ENCODE measurements at regions of chr13 and their contacts with region 1.

Region 1: DNA sequence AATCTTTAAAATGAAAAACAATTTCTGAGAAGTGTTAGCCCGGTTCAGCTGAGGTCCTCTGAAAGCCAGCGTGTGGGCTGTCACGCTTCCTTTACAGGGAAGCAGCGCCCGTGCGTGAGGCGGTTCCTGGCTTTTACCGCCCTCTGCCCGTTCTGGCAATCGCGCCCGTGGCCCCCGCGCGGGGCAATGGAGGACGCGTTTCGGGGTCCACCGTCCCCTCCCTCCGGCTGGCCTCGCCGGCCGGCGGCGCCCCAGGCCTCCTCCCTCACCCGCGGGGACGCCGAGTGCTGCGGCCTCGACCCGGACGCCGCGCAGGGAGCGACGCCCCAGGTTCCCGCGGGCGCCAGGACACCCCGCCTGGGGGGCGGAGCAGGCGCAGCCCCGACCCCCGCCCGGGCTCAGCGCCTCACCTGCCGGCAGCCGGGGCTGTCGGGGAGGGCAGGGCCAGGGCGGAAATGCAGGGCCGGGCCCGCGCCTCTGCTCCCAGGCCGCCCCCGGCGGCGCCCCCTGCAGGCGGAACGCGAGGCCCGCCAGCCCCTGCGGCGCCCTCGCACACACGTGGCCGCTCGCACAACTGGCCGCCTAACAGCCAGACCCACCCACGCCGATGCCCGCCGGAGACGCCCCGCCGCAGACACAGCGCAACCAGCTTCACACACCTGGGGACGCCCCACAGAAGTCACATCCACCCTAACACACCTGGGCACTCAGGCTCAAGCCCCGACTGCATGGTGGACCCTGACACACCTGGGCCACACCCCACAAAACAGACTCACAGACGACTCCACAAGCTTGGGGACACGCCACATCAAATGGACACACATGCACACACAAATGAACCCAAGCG is at the start of gene GGACT:
- DNase-seq: peak; percentile 95
- H3K4me3 ChIP-seq: peak within 1 kb of the TSS; percentile 72 to 74
- H3K27ac ChIP-seq: peak within 1 kb of the TSS in 1 of 2 experiments; percentile 5; a peak in 1 of 4 replicates
- H3K4me1 ChIP-seq: peaks cover 0 to 5% of the 10 kb centered on the region in 2 experiments; a peak in 1 of 4 replicates
- H3K27me3 ChIP-seq: no peaks in the 10 kb centered on the region
- CTCF ChIP-seq: peak; percentile 65
- EP300 ChIP-seq: no peak
- RAD21 ChIP-seq: no peak
- polyA plus RNA-seq, gene GGACT: 5.4 and 7.1 TPM in 2 replicates

Region 2: DNA sequence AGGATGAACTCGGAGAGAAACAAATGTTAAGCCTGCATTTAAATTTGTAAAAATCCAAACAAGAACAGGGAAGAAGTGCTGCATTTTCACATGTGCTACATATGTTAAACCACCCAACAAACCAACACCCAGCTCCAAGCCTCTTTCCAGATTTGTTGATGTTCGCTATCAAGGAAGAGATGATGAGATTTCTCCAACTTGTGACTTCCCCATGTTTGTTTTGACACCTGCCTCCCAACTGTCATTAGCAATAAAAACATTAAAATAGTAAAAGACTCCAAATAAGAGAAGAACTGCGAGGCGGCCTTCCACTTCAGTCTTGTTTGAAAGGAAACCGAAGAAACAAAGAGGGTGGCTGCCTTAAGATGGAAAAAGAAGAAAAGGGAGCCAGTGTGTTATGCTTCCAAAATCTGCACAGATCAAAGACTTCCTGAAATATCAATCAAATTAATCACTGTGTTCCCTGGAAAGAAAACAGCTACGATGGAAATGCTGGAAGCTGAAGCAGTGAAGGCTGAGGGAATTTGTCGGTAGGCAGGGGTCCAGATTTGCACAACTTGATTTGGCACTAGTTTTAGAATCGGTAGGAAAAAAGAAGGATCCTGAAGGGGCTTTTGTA is 14.0 kb after region 1 on chr13:
- CTCF ChIA-PET with region 1: interaction called, 20 read pairs
- POLR2A ChIA-PET with region 1: no interaction called
- DNase-seq: no peak
- H3K4me3 ChIP-seq: no peak overlapping the region
- H3K27ac ChIP-seq: no peak overlapping the region
- H3K4me1 ChIP-seq: no peaks in the 10 kb centered on the region
- H3K27me3 ChIP-seq: no peaks in the 10 kb centered on the region
- CTCF ChIP-seq: no peak
- EP300 ChIP-seq: no peak
- RAD21 ChIP-seq: no peak

Measured in SK-N-SH (cell line).